Natural killer cell (primary cell): ENCODE measurements at regions of chr6 and their contacts with region 1.

Region 1: DNA sequence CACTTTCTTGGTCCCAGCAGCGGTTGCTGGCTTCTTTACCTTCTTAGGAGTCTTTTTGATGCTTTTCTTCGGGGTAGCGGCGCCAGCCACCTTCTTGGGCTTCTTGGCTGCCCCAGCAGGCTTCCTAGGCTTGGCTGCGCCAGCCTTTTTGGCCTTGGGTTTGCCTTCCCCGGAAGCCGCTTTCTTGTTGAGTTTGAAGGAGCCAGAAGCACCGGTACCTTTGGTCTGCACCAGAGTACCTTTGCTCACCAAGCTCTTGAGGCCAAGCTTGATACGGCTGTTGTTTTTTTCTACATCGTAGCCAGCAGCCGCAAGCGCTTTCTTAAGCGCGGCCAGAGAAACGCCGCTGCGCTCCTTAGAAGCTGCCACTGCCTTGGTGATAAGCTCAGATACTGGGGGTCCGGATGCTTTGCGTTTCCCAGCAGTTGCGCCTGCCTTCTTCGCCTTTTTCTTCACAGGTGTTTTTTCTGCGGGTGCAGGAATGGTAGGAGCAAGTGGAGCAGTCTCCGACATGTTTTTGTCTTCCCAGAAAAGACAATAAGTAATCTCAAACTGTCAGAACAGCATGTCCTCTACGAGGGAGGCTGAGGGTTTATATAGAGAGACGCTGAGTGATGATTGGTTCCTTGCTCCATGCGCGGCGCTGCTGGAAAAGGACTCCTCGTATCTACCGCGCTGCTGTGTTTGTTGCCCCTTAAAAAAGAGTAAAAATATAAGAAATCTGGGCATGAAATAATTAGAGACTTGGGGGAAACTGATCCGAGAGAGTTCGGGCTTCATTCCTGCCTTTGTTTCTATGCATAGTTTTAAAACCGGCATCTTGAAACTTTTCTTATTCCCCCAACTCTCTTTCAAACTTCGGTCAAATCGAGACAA is 130.3 kb upstream of the BTN3A2 start:
- DNase-seq: peak; percentile 64 to 86
- ATAC-seq: peak; percentile 73 to 84 (median 73)
- H3K4me3 ChIP-seq: peak overlapping the region; percentile 69
- H3K4me3 Mint-ChIP-seq: peak overlapping the region; percentile 91
- H3K27ac ChIP-seq: peak overlapping the region; percentile 92
- H3K27ac Mint-ChIP-seq: peak overlapping the region; percentile 91 to 98
- H3K4me1 ChIP-seq: peaks cover 23% of the 10 kb centered on the region
- H3K4me1 Mint-ChIP-seq: peaks cover 32 to 37% of the 10 kb centered on the region in 2 donors
- H3K27me3 ChIP-seq: no peaks in the 10 kb centered on the region
- H3K27me3 Mint-ChIP-seq: no peaks in the 10 kb centered on the region
- CTCF ChIP-seq: no peak

Region 2: DNA sequence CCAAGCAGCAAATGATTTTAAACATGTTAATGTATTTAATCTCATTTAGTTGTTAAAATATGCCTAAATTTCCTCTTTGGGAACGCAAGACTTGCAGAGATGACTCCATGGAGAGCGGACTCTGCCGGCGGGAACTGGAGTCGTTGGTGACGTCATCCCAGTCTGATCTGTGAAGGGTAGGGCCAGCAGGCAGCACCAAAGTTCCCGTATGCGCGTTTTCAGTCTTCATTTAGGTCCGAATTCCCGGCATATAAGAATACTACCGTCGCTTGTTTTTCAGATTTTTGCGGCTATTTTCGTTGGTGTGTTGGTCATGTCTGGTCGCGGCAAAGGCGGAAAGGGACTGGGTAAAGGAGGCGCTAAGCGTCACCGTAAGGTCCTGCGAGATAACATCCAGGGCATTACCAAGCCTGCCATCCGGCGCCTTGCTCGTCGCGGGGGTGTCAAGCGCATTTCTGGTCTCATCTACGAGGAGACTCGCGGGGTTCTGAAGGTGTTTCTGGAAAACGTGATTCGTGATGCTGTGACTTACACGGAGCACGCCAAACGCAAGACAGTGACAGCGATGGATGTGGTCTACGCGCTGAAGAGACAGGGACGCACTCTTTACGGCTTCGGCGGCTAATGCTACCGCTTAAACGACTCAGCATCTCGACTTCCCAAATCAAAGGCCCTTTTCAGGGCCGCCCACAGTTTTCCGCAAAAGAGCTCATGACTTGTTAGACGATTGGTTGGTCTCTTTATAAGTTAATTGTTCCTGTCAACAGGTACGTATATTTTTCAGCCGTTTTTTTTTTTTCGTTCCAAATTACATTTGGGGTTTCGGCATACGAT is 30.1 kb before region 1 on chr6:
- intact Hi-C with region 1: loop called (anchors 1 kb)
- DNase-seq: peak; percentile 78 to 97
- ATAC-seq: peak; percentile 63 to 81 (median 69)
- H3K4me3 ChIP-seq: peak overlapping the region; percentile 81
- H3K4me3 Mint-ChIP-seq: no peak overlapping the region
- H3K27ac ChIP-seq: peak overlapping the region; percentile 96
- H3K27ac Mint-ChIP-seq: no peak overlapping the region
- H3K4me1 ChIP-seq: peaks cover 25% of the 10 kb centered on the region
- H3K4me1 Mint-ChIP-seq: peaks cover 13 to 19% of the 10 kb centered on the region in 2 donors
- H3K27me3 ChIP-seq: no peaks in the 10 kb centered on the region
- H3K27me3 Mint-ChIP-seq: no peaks in the 10 kb centered on the region
- CTCF ChIP-seq: peak; percentile 23

Region 3: GRCh38 chr6:26223650-26224546 is 10.8 kb before region 1 on chr6:
- intact Hi-C with region 1: loop called (anchors 1 kb)
- DNase-seq: peak in 1 of 2 donors; percentile 87
- ATAC-seq: peak; percentile 84 to 86 (median 85)
- H3K4me3 ChIP-seq: peak overlapping the region; percentile 79
- H3K4me3 Mint-ChIP-seq: no peak overlapping the region
- H3K27ac ChIP-seq: peak overlapping the region; percentile 89
- H3K27ac Mint-ChIP-seq: no peak overlapping the region
- H3K4me1 ChIP-seq: peaks cover 6% of the 10 kb centered on the region
- H3K4me1 Mint-ChIP-seq: no peaks in the 10 kb centered on the region
- H3K27me3 ChIP-seq: no peaks in the 10 kb centered on the region
- H3K27me3 Mint-ChIP-seq: no peaks in the 10 kb centered on the region
- CTCF ChIP-seq: no peak

Region 4: GRCh38 chr6:26251354-26252076 is 16.9 kb after region 1 on chr6:
- intact Hi-C with region 1: no loop called
- DNase-seq: peak; percentile 61 to 82
- ATAC-seq: peak; percentile 56 to 64 (median 58)
- H3K4me3 ChIP-seq: peak overlapping the region; percentile 74
- H3K4me3 Mint-ChIP-seq: peak overlapping the region; percentile 98
- H3K27ac ChIP-seq: peak overlapping the region; percentile 76
- H3K27ac Mint-ChIP-seq: peak overlapping the region; percentile 96 to 97
- H3K4me1 ChIP-seq: peaks cover 16% of the 10 kb centered on the region
- H3K4me1 Mint-ChIP-seq: peaks cover 39 to 40% of the 10 kb centered on the region in 2 donors
- H3K27me3 ChIP-seq: no peaks in the 10 kb centered on the region
- H3K27me3 Mint-ChIP-seq: no peaks in the 10 kb centered on the region
- CTCF ChIP-seq: no peak

Region 5: DNA sequence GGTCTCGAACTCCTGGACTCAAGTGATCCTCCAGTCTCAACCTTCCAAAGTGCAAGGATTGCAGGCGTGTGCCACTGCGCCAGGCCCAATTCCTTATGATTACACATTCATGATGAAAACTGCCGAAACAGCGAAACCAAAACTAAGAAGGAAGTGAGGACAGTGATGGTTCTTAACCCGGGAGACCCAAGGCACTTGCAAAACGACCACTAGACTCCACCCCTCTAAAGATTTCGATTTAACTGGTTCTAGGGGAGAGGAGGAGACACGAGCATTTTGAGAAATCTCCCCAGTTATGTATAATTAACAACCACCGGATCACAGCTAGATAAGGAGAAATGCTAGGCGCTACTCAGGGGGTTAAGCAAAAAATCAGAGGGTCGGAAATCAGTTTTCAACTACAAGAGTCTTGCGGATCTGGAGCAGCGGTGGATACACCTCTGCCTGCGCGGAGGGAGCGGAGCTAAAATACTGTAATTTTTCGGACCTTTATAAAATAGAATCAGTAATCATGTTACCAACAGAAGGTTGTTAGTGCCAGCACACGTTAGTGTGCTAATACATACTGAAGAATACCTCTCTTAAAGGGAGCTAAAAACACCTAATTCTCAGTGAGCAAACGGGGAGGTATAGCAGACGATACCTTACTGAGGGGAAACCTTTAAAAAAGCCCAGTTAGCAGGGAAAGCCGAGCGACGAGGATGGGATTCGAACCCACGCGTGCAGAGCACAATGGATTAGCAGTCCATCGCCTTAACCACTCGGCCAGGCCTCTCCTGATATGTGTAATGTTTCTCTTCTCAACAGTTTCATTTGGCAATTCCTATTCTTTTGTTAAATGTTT is 70.4 kb after region 1 on chr6:
- intact Hi-C with region 1: loop called (anchors 5 kb)
- DNase-seq: peak; percentile 61 to 80
- ATAC-seq: peak; percentile 72 to 85 (median 78)
- H3K4me3 ChIP-seq: peak overlapping the region; percentile 43
- H3K4me3 Mint-ChIP-seq: peak overlapping the region; percentile 99
- H3K27ac ChIP-seq: peak overlapping the region; percentile 65
- H3K27ac Mint-ChIP-seq: peak overlapping the region; percentile 96 to 100
- H3K4me1 ChIP-seq: peaks cover 31% of the 10 kb centered on the region
- H3K4me1 Mint-ChIP-seq: peaks cover 56 to 62% of the 10 kb centered on the region in 2 donors
- H3K27me3 ChIP-seq: no peaks in the 10 kb centered on the region
- H3K27me3 Mint-ChIP-seq: no peaks in the 10 kb centered on the region
- CTCF ChIP-seq: no peak

Region 6: DNA sequence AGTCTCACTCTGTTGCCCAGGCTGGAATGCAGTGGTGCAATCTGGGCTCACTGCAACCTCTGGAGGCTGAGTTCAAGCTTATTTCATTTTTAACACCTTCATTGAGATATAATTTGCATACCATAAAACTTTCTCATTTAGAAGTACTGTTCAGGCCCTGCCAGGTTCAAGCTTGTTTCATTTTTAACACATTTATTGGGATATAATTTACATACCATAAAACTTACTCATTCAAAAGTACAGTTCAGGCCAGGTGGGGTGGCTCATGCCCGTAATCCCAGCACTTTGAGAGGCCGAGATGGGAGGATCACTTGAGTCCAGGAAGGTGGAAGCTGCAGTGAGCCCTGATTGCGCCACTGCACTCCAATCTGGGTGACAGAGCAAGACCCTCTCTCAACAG is 1727.8 kb after region 1 on chr6:
- intact Hi-C with region 1: no loop called
- DNase-seq: no peak
- ATAC-seq: no peak
- H3K4me3 ChIP-seq: no peak overlapping the region
- H3K4me3 Mint-ChIP-seq: no peak overlapping the region
- H3K27ac ChIP-seq: no peak overlapping the region
- H3K27ac Mint-ChIP-seq: no peak overlapping the region
- H3K4me1 ChIP-seq: no peaks in the 10 kb centered on the region
- H3K4me1 Mint-ChIP-seq: no peaks in the 10 kb centered on the region
- H3K27me3 ChIP-seq: no peaks in the 10 kb centered on the region
- H3K27me3 Mint-ChIP-seq: peaks cover 17 to 34% of the 10 kb centered on the region in 2 donors
- CTCF ChIP-seq: no peak